Activated CD8-positive, alpha-beta T cell treated with anti-CD3 and anti-CD28 coated beads for 36 hours (primary cell): ENCODE measurements at regions of chr1 and their contacts with region 1.

Region 1: DNA sequence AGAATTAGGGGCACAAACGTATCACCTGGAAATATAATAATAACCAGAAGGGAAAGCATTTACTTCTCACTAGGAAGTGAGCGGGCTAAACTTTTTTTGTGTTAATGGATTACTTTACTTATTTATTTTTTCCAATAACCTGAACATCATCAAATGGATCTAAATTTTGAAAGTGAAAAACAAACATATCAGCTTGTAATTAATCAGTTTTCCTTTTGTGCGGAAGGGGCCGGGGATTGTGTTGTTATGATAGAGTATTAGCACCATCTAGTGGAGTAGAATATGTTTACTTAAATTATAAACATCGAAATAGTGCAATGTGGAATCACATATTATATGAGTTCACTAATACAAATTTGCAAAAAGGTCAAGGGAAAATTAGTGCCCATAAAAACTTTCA is 9.0 kb downstream of the CFH start:
- DNase-seq: no peak
- ATAC-seq: no peak
- H3K4me3 Mint-ChIP-seq: no peak overlapping the region
- H3K27ac Mint-ChIP-seq: no peak overlapping the region
- H3K4me1 Mint-ChIP-seq: no peaks in the 10 kb centered on the region
- H3K27me3 Mint-ChIP-seq: no peaks in the 10 kb centered on the region
- CTCF ChIP-seq: peak; percentile 81

Region 2: GRCh38 chr1:196148367-196148970 is 512.4 kb before region 1 on chr1:
- CTCF ChIA-PET with region 1: interaction called, 30 read pairs
- POLR2A ChIA-PET with region 1: no interaction called
- intact Hi-C with region 1: loop called (anchors 2 kb)
- DNase-seq: no peak
- ATAC-seq: no peak
- H3K4me3 Mint-ChIP-seq: no peak overlapping the region
- H3K27ac Mint-ChIP-seq: no peak overlapping the region
- H3K4me1 Mint-ChIP-seq: no peaks in the 10 kb centered on the region
- H3K27me3 Mint-ChIP-seq: no peaks in the 10 kb centered on the region
- CTCF ChIP-seq: peak; percentile 35

Region 3: DNA sequence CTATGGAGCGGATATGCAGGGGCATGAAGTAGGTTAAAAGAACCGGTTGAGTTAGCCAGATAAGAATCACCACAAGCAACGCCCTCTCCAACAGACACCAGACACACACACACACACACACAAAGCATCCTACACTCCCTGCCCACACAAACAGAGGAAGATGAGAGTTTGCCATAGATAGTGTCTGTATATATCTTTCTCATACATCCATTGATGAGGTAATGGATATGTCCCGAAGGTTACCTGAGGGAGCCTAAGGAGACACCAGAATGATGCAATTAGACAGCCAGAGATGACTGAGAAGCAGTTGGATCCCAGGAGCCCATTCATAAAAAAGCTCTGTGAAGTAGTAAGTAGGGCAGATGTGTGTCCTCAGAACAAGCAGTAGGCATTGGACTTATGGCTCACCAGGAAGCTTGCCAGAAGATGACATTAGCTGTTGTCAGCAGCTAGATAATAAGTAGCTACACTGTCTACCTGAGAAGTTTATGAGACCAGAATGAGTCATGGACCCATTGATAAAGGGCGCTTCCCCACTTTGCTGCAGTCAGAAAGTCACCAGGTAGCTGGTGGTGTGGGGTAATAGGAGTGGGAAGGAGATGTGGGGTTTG is 299.6 kb before region 1 on chr1:
- CTCF ChIA-PET with region 1: no interaction called
- POLR2A ChIA-PET with region 1: no interaction called
- intact Hi-C with region 1: loop called (anchors 10 kb)
- DNase-seq: no peak
- ATAC-seq: no peak
- H3K4me3 Mint-ChIP-seq: no peak overlapping the region
- H3K27ac Mint-ChIP-seq: no peak overlapping the region
- H3K4me1 Mint-ChIP-seq: no peaks in the 10 kb centered on the region
- H3K27me3 Mint-ChIP-seq: no peaks in the 10 kb centered on the region
- CTCF ChIP-seq: no peak